ENCODE measurements at regions of chr10 and their contacts with region 1.

Region 1: GRCh38 chr10:12656518-12657142 is 307.3 kb downstream of the CAMK1D start:
- DNase-seq: peak; percentile 54
- H3K4me3 Mint-ChIP-seq: no peak overlapping the region
- H3K27ac Mint-ChIP-seq: no peak overlapping the region
- H3K4me1 Mint-ChIP-seq: no peaks in the 10 kb centered on the region
- H3K27me3 Mint-ChIP-seq: no peaks in the 10 kb centered on the region
- CTCF ChIP-seq: peak; percentile 55

Region 2: GRCh38 chr10:12214763-12215218 is 441.8 kb before region 1 on chr10:
- CTCF ChIA-PET with region 1: interaction called, 6 read pairs
- POLR2A ChIA-PET with region 1: no interaction called
- intact Hi-C with region 1: loop called (anchors 2 kb)
- DNase-seq: peak; percentile 65
- H3K4me3 Mint-ChIP-seq: no peak overlapping the region
- H3K27ac Mint-ChIP-seq: peak overlapping the region; percentile 59
- H3K4me1 Mint-ChIP-seq: no peaks in the 10 kb centered on the region
- H3K27me3 Mint-ChIP-seq: no peaks in the 10 kb centered on the region
- CTCF ChIP-seq: peak; percentile 66

Region 3: DNA sequence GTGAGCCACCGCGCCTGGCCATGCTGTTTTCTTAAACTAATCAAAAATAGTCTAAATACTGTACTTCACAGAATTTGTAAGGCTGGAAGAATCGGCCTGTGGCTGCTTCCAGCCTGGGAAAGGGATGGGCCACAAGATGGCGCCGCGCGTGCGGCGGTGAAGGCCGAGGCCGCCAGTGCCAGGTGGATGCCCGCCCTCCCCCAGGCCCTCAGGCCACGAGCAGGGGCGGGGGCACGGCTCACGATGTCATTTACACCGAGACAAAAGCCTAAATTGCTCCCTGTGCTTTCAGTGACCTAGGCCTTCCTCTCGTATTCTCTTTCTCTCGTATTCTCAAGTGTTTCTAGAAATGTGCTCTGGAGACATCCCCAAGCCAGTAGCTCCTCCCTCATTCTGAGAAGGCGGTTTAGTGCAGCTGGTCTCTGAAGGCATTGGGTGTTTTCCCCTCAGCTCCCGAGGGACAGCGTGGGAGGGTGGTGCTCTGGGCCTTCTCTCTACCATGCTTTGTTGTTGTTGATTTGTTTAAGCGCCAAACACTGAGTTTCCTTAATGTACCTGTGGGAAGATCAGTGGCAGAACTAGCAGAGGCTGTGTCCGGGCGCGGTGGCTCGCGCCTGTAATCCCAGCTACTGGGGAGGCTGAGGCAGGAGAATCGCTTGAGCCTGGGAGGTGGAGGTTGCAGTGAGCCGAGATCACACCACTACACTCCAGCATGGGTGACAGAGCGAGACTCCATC is 392.3 kb before region 1 on chr10:
- CTCF ChIA-PET with region 1: interaction called, 126 read pairs
- POLR2A ChIA-PET with region 1: interaction called, 7 read pairs
- intact Hi-C with region 1: loop called (anchors 1 kb)
- DNase-seq: peak; percentile 62
- H3K4me3 Mint-ChIP-seq: peak overlapping the region; percentile 62
- H3K27ac Mint-ChIP-seq: peak overlapping the region; percentile 40
- H3K4me1 Mint-ChIP-seq: peaks cover 8% of the 10 kb centered on the region
- H3K27me3 Mint-ChIP-seq: no peaks in the 10 kb centered on the region
- CTCF ChIP-seq: peak; percentile 90

Region 4: GRCh38 chr10:12271210-12271540 is 385.5 kb before region 1 on chr10:
- CTCF ChIA-PET with region 1: interaction called, 126 read pairs
- POLR2A ChIA-PET with region 1: interaction called, 6 read pairs
- intact Hi-C with region 1: no loop called
- DNase-seq: no peak
- H3K4me3 Mint-ChIP-seq: peak overlapping the region; percentile 47
- H3K27ac Mint-ChIP-seq: peak overlapping the region; percentile 66
- H3K4me1 Mint-ChIP-seq: peaks cover 6% of the 10 kb centered on the region
- H3K27me3 Mint-ChIP-seq: no peaks in the 10 kb centered on the region
- CTCF ChIP-seq: no peak

Region 5: GRCh38 chr10:12348870-12349628 is 307.6 kb before region 1 on chr10 and contains the start of gene CAMK1D:
- CTCF ChIA-PET with region 1: interaction called, 3 read pairs
- POLR2A ChIA-PET with region 1: interaction called, 3 read pairs
- intact Hi-C with region 1: loop called (anchors 1 kb)
- DNase-seq: peak; percentile 55
- H3K4me3 Mint-ChIP-seq: peak within 1 kb of the TSS; percentile 88
- H3K27ac Mint-ChIP-seq: no peak within 1 kb of the TSS
- H3K4me1 Mint-ChIP-seq: peaks cover 10% of the 10 kb centered on the region
- H3K27me3 Mint-ChIP-seq: peaks cover 15% of the 10 kb centered on the region
- CTCF ChIP-seq: peak; percentile 35
- total RNA-seq, gene CAMK1D: 1.7 and 3.3 TPM in 2 replicates

Region 6: GRCh38 chr10:12645449-12645848 is 11.2 kb before region 1 on chr10:
- CTCF ChIA-PET with region 1: interaction called, 12 read pairs
- POLR2A ChIA-PET with region 1: interaction called, 3 read pairs
- intact Hi-C with region 1: no loop called
- DNase-seq: no peak
- H3K4me3 Mint-ChIP-seq: no peak overlapping the region
- H3K27ac Mint-ChIP-seq: no peak overlapping the region
- H3K4me1 Mint-ChIP-seq: no peaks in the 10 kb centered on the region
- H3K27me3 Mint-ChIP-seq: no peaks in the 10 kb centered on the region
- CTCF ChIP-seq: no peak

Region 7: DNA sequence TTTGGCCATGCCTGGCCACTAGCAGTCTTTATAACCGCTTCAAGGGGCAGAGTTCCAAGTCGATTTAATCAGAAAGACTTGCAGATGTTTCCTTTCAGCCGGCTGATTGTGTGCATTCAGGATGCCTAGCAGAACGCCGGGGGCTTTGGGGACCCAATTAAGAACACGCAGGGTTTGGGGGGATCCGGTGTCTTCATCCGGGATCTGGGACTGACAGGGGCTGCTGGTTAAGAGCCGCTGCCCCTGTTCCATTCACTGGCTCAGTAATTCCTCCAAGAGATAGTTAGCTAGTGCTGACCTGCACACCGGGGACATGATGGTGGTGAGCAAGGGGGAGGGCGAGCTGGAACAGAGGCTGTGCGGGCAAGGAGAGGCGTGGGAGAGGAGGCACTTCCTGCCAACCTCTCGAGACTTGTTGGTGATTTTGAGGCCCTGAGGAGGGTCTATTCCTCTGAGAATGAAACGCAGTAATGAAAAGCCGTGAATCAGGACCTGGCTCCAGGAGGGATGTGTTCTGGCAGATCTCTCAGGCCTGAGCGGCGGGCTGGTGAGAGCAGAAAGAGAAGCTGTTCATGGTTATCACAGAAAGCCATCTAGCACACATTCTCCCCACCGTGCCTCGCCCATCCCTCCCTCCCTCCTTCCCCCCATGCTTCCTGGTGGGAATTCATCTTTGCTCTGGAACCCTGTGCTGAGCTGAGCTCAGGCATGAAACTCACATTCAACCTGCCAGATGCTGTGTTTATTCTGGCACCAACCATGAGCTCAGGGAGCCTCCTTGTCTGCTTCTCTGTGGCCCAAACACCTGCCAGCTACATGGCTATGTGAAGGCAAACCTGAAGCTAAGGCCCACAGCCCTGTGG is 192.9 kb after region 1 on chr10:
- CTCF ChIA-PET with region 1: no interaction called
- POLR2A ChIA-PET with region 1: no interaction called
- intact Hi-C with region 1: no loop called
- DNase-seq: peak; percentile 24
- H3K4me3 Mint-ChIP-seq: no peak overlapping the region
- H3K27ac Mint-ChIP-seq: peak overlapping the region; percentile 90
- H3K4me1 Mint-ChIP-seq: peaks cover 23% of the 10 kb centered on the region
- H3K27me3 Mint-ChIP-seq: no peaks in the 10 kb centered on the region
- CTCF ChIP-seq: no peak

Region 8: DNA sequence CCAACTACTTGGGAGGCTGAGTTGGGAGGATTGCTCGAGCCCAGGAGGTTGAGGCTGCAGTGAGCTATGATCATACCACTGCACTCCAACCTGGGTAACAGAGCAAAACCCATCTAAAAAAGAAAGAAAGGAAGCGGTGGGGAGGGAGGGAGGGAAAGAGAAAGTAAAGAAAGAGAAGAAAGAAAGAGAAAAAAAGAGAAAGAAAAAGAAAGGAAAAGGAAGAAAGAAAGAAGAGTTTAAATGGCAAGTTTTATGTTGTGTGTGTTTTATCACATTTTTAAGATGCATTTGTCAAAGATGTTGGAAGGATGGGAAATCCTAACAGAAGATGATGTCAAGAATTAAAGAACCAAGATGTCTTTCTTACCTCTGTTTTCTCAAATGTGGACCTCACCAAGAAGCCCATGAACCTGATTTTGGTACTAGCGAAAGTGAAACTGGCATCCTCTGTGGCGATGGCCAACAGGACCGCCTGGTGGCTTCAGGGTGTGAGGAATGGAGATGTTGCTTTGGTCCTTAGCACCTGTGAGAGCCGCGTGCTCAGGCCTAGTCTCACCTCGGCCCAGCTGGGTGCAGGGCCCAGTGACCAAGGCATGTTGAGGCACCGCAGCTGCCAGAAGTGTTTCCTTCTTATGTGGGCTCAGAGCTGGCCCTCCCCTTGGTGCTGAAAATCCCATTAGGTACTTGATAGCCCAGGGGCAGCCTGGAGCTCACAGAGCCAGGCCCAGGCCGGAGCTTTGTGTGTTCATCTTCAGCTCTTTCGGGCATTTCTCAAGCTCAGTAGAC is 567.8 kb after region 1 on chr10:
- CTCF ChIA-PET with region 1: no interaction called
- POLR2A ChIA-PET with region 1: no interaction called
- intact Hi-C with region 1: no loop called
- DNase-seq: no peak
- H3K4me3 Mint-ChIP-seq: no peak overlapping the region
- H3K27ac Mint-ChIP-seq: no peak overlapping the region
- H3K4me1 Mint-ChIP-seq: no peaks in the 10 kb centered on the region
- H3K27me3 Mint-ChIP-seq: no peaks in the 10 kb centered on the region
- CTCF ChIP-seq: no peak

Region 9: DNA sequence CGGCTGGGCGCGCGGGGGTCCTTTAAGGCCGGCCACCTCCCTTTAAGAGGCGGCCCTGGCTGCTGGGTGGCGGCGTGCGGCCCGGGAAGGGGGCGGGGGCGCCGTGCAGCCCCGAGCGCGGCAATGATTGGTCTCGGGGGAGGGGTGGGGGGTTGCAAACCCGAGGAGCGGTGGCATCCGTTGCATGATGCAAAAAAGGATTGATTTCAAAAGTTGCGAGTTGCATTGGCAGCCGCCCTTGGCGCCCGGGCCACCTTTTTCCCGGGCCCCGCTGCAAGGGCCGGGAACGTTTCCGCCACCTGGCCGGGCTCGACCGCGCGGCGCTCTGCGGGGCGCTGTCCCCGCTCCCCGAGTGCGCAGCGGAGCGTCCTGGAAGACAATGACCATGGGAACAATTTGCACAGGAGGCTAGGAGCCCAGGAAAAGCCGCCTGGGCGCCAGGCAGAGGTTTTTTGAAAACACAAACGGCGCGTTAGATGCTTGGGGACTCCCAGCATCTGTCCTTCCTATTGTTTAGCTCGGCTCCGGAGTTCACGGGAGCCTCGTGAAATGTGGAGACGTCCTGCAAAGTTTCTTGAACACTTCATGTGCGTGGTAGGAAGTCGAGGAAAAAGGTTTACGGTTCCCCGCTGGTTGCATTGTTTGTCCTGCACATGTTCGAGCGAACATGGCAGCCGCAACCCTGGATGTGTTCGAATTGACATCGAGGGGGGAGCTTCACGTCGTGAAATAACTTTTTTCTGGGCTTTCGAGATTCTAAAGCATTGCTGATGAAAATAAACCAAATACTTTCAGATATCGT is 691.8 kb after region 1 on chr10 and contains the start of gene SEPHS1:
- CTCF ChIA-PET with region 1: no interaction called
- POLR2A ChIA-PET with region 1: no interaction called
- intact Hi-C with region 1: no loop called
- DNase-seq: peak; percentile 87
- H3K4me3 Mint-ChIP-seq: peak within 1 kb of the TSS; percentile 86
- H3K27ac Mint-ChIP-seq: peak within 1 kb of the TSS; percentile 83
- H3K4me1 Mint-ChIP-seq: peaks cover 13% of the 10 kb centered on the region
- H3K27me3 Mint-ChIP-seq: peaks cover 10% of the 10 kb centered on the region
- CTCF ChIP-seq: no peak
- total RNA-seq, gene SEPHS1: 44.8 and 60.8 TPM in 2 replicates

Measured in MCF 10A (cell line).